Activated CD4-positive, alpha-beta memory T cell treated with anti-CD3 and anti-CD28 coated beads for 36 hours (primary cell): ENCODE measurements at regions of chr2 and their contacts with region 1.

Region 1: DNA sequence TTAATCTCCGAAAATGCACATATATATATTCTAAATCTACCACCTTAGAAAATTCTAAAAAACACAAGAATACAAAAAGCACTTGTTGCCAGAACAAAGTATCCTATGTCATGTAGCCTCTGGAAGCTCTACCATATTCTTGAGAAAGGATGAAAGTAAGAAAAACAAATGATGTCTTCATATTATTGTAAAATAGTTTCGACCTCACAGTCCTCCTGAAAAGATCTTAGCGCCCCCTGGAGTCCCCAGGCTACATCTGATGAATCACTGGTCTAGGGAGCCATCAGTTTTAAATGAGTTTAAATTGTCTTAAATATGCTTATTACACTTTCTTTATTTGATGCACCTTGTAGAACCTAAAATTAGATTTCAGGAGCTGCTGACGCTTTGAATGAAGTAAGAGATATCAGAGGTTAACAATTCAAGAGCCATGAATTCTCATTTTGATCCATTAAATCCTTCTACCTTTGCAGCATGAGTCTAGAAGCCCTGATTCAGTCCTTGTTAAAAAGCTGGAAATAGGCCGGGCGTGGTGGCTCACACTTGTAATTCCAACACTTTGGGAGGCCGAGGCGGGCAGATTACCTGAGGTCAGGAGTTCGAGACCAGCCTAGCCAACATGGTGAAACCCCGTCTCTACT is 138.8 kb downstream of the MCFD2 start:
- DNase-seq: peak; percentile 66
- H3K4me3 Mint-ChIP-seq: no peak overlapping the region
- H3K27ac Mint-ChIP-seq: no peak overlapping the region
- H3K4me1 Mint-ChIP-seq: peaks cover 1% of the 10 kb centered on the region
- H3K27me3 Mint-ChIP-seq: peaks cover 5% of the 10 kb centered on the region

Region 2: GRCh38 chr2:46470114-46470628 is 306.6 kb before region 1 on chr2:
- CTCF ChIA-PET with region 1: no interaction called
- POLR2A ChIA-PET with region 1: no interaction called
- intact Hi-C with region 1: loop called (anchors 5 kb)
- DNase-seq: no peak
- H3K4me3 Mint-ChIP-seq: no peak overlapping the region
- H3K27ac Mint-ChIP-seq: no peak overlapping the region
- H3K4me1 Mint-ChIP-seq: no peaks in the 10 kb centered on the region
- H3K27me3 Mint-ChIP-seq: no peaks in the 10 kb centered on the region

Region 3: GRCh38 chr2:46490521-46491141 is 286.2 kb before region 1 on chr2:
- CTCF ChIA-PET with region 1: no interaction called
- POLR2A ChIA-PET with region 1: no interaction called
- intact Hi-C with region 1: no loop called
- DNase-seq: no peak
- H3K4me3 Mint-ChIP-seq: no peak overlapping the region
- H3K27ac Mint-ChIP-seq: no peak overlapping the region
- H3K4me1 Mint-ChIP-seq: peaks cover 12% of the 10 kb centered on the region
- H3K27me3 Mint-ChIP-seq: peaks cover 2% of the 10 kb centered on the region

Region 4: GRCh38 chr2:46632349-46632748 is 144.5 kb before region 1 on chr2:
- CTCF ChIA-PET with region 1: interaction called, 3 read pairs
- POLR2A ChIA-PET with region 1: no interaction called
- intact Hi-C with region 1: loop called (anchors 2 kb)
- DNase-seq: no peak
- H3K4me3 Mint-ChIP-seq: no peak overlapping the region
- H3K27ac Mint-ChIP-seq: no peak overlapping the region
- H3K4me1 Mint-ChIP-seq: peaks cover 7% of the 10 kb centered on the region
- H3K27me3 Mint-ChIP-seq: no peaks in the 10 kb centered on the region

Region 5: GRCh38 chr2:46657042-46657504 is 119.7 kb before region 1 on chr2:
- CTCF ChIA-PET with region 1: interaction called, 8 read pairs
- POLR2A ChIA-PET with region 1: no interaction called
- intact Hi-C with region 1: loop called (anchors 5 kb)
- DNase-seq: no peak
- H3K4me3 Mint-ChIP-seq: no peak overlapping the region
- H3K27ac Mint-ChIP-seq: no peak overlapping the region
- H3K4me1 Mint-ChIP-seq: no peaks in the 10 kb centered on the region
- H3K27me3 Mint-ChIP-seq: peaks cover 4% of the 10 kb centered on the region

Region 6: DNA sequence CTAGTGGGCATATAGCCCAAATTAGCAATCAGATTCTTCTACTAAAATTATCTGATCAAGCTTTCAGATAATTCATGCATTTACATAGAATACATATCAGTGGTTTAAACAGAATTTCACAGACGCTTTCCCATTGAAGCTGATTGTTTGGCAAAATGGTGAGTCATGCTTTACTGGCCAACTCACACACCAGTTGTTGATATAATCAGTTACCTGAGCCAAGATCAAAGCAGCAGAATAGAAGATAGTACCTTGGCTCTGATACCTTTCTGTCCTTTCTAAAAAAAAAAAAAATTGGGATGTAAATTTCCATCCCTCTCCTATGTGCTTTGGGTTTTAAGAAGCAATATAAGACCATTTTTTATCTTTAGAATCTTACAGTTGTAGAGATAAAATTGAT is 39.2 kb before region 1 on chr2:
- CTCF ChIA-PET with region 1: no interaction called
- POLR2A ChIA-PET with region 1: no interaction called
- intact Hi-C with region 1: no loop called
- DNase-seq: no peak
- H3K4me3 Mint-ChIP-seq: no peak overlapping the region
- H3K27ac Mint-ChIP-seq: no peak overlapping the region
- H3K4me1 Mint-ChIP-seq: peaks cover 22% of the 10 kb centered on the region
- H3K27me3 Mint-ChIP-seq: no peaks in the 10 kb centered on the region

Region 7: DNA sequence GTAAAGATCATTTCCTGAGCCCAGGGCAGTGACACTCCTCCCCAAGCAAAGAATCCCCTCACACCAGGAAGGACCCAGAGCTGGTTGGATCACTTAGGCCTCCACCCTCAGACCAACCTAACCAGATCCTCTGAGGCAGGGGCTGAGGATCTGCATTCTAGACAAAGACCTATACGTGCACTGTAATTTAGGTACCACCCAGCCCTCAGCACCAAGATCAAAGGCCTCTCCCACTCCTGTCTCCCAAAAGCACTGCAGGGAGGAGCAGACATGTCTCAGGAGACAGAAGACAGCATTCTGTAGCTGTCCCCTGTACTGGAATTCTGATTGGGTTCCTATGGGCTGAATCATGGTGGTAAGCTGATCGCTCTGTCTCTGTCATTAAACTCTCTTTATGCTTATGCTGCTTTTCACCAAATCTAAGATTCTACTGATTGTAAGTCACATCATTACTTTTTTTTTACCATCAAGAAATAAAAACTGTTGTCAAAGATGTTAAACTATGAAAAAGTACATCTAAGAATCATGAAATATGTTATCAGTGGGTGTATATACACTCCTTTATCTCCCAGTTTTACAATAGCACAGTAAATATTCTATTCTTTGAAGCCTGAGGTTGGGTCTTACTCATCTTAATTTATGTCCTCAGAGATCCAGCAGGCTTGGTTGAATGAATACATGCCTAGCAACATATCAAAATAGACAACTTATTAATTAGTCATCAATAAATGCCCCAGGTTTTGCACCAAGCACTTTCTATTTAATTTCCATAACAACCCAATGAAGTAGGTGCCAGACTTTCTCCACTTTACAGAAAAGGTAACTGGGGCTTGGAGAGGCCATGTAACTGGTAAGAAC is 110.5 kb after region 1 on chr2:
- CTCF ChIA-PET with region 1: interaction called, 5 read pairs
- POLR2A ChIA-PET with region 1: no interaction called
- intact Hi-C with region 1: loop called (anchors 5 kb)
- DNase-seq: no peak
- H3K4me3 Mint-ChIP-seq: no peak overlapping the region
- H3K27ac Mint-ChIP-seq: peak overlapping the region; percentile 20
- H3K4me1 Mint-ChIP-seq: peaks cover 9% of the 10 kb centered on the region
- H3K27me3 Mint-ChIP-seq: peaks cover 12% of the 10 kb centered on the region

Region 8: DNA sequence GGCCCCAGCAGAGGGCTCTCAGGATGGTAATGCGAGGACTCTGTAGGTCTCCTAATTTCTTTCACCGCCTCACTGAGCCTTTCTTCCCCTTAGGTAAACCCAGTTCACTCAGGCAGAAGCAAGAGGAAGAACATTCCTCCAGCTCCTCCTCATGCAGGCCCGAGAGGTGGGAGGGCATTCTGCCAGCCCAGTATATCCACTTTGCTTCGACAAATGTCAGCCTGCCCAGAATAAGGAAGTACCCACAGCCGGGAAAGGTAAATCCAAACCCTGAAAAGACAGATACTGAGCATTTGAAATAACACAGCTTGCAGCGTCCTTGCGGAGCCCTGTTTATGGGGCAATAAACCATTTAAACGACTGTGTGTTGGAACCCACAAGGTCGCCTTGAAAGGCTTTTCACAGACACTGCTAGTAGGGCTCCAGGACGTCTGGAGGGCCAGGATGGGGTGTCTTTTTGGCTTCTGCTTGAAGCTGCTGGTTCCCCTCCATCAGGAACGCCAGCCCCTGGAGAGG is 441.3 kb after region 1 on chr2:
- CTCF ChIA-PET with region 1: no interaction called
- POLR2A ChIA-PET with region 1: no interaction called
- intact Hi-C with region 1: no loop called
- DNase-seq: no peak
- H3K4me3 Mint-ChIP-seq: no peak overlapping the region
- H3K27ac Mint-ChIP-seq: no peak overlapping the region
- H3K4me1 Mint-ChIP-seq: no peaks in the 10 kb centered on the region
- H3K27me3 Mint-ChIP-seq: peaks cover 7% of the 10 kb centered on the region